ENCODE measurements at regions of chr17 and their contacts with region 1.

Region 1: GRCh38 chr17:72120642-72121163 is at the start of gene SOX9:
- DNase-seq: no peak
- ATAC-seq: no peak
- H3K4me3 Mint-ChIP-seq: peak within 1 kb of the TSS; percentile 35
- H3K27ac Mint-ChIP-seq: no peak within 1 kb of the TSS
- H3K4me1 Mint-ChIP-seq: peaks cover 14% of the 10 kb centered on the region
- H3K27me3 Mint-ChIP-seq: peaks cover 68% of the 10 kb centered on the region
- total RNA-seq, gene SOX9: not detected

Region 2: DNA sequence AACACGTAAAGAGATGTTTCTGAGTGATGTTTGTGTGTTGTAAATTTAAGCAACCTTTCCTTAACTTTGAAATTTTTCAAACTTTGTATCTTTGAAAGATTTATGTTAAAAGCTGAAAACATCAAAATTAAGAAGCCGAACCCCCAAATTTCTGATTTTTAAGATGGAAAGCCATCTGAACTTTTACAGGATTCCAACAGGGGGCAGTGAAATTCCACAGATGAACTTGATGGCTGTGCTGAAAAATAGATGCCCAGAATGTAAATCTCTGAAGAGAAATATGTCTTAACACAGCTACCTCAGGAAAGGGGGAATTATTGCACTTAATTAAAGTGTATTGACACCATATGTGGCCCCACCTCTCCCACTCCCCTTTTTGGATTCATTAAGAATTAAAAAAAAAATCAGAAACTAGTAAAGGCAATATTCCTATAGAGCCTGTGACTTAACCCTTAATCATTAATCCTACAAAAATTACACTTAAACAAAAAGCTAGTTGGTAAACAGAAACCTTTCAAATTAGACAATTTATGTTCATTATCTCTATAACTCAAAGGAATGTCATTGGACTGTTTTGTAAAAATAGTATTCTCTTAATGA is 1353.5 kb before region 1 on chr17:
- CTCF ChIA-PET with region 1: no interaction called
- POLR2A ChIA-PET with region 1: no interaction called
- intact Hi-C with region 1: loop called in 1 of 2 experiments (anchors 10 kb)
- DNase-seq: peak; percentile 4
- ATAC-seq: no peak
- H3K4me3 Mint-ChIP-seq: no peak overlapping the region
- H3K27ac Mint-ChIP-seq: no peak overlapping the region
- H3K4me1 Mint-ChIP-seq: no peaks in the 10 kb centered on the region
- H3K27me3 Mint-ChIP-seq: no peaks in the 10 kb centered on the region

Region 3: DNA sequence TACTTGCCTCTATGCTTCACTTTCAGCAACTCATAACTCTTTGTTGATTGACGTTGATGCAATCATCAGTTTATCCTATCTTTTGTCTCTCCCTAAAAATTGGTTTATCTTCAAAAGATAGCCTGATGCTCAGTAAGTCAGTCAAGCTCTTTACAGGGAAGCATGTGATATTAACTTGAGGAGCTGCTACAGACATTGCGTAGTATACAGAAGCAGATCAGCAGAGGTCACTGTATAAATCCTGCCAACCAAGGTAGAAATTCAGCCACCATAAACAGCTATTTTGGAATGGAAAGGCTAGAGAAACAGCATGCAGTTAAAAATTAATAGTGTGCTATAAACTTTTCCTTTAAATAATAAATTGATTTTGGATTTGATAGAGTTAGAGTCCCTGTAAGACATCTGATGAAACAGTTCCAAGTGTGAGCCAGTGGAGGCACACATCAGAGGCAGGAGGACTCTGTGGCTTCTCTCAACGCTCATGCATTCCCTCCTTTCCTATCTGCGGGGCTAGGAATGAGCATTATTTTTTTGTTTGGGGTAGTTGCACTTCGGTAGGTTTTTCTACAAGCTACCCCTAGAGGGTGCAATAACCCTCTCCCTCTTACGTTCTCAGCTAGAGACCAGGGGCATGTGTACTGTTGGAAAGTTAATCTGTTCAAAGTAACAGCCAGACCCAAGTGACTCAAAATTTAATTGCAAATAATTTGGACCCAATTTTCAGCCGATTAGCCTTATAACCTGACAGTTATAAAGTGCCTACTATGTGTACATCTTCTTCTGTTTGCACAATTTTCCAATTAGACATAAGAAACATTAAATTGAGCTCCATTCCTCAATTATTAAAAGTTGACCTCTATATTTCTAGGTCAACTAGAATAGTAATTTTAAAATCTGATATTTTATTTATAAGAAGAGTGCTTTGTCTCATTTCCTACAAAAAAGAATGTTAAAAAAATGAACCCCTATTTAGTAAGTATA is 647.6 kb before region 1 on chr17:
- CTCF ChIA-PET with region 1: interaction called, 3 read pairs
- POLR2A ChIA-PET with region 1: no interaction called
- intact Hi-C with region 1: loop called (anchors 1 to 2 kb)
- DNase-seq: no peak
- ATAC-seq: no peak
- H3K4me3 Mint-ChIP-seq: no peak overlapping the region
- H3K27ac Mint-ChIP-seq: no peak overlapping the region
- H3K4me1 Mint-ChIP-seq: no peaks in the 10 kb centered on the region
- H3K27me3 Mint-ChIP-seq: no peaks in the 10 kb centered on the region

Region 4: DNA sequence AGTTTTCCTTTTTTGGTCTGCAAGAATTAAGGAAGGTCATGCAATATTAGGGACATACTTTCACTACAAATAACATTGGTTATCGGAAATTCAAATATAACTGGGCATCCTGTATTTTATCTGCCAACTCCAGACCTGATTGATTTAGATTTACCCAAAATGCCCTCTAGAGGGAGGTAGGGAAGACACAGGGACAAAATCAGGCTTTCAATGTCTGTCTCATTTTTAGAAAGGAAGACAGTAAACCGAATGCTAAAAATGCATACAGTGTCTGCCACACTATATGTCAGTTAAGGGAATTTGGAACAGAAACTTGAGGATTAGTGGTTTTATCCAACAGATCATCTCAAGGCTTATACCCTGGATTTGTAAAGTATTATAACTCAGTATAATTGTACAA is 161.5 kb before region 1 on chr17:
- CTCF ChIA-PET with region 1: no interaction called
- POLR2A ChIA-PET with region 1: no interaction called
- intact Hi-C with region 1: no loop called
- DNase-seq: no peak
- ATAC-seq: no peak
- H3K4me3 Mint-ChIP-seq: no peak overlapping the region
- H3K27ac Mint-ChIP-seq: no peak overlapping the region
- H3K4me1 Mint-ChIP-seq: no peaks in the 10 kb centered on the region
- H3K27me3 Mint-ChIP-seq: no peaks in the 10 kb centered on the region

Region 5: GRCh38 chr17:72104164-72104862 is 16.4 kb before region 1 on chr17:
- CTCF ChIA-PET with region 1: no interaction called
- POLR2A ChIA-PET with region 1: no interaction called
- intact Hi-C with region 1: no loop called
- DNase-seq: no peak
- ATAC-seq: no peak
- H3K4me3 Mint-ChIP-seq: no peak overlapping the region
- H3K27ac Mint-ChIP-seq: no peak overlapping the region
- H3K4me1 Mint-ChIP-seq: no peaks in the 10 kb centered on the region
- H3K27me3 Mint-ChIP-seq: peaks cover 18% of the 10 kb centered on the region

Region 6: GRCh38 chr17:72136693-72137092 is 16.0 kb after region 1 on chr17:
- CTCF ChIA-PET with region 1: no interaction called
- POLR2A ChIA-PET with region 1: no interaction called
- intact Hi-C with region 1: no loop called
- DNase-seq: no peak
- ATAC-seq: no peak
- H3K4me3 Mint-ChIP-seq: no peak overlapping the region
- H3K27ac Mint-ChIP-seq: no peak overlapping the region
- H3K4me1 Mint-ChIP-seq: no peaks in the 10 kb centered on the region
- H3K27me3 Mint-ChIP-seq: peaks cover 16% of the 10 kb centered on the region

Measured in activated CD4-positive, alpha-beta T cell treated with anti-CD3 and anti-CD28 coated beads for 36 hours (primary cell).